GM12878 (cell line): ENCODE measurements at regions of chr14 and their contacts with region 1.

Region 1: GRCh38 chr14:22319526-22320361 is 269.3 kb downstream of the DAD1 start:
- DNase-seq: peak; percentile 42
- ATAC-seq: peak; percentile 97
- H3K4me3 ChIP-seq: no peak overlapping the region
- H3K27ac ChIP-seq: no peak overlapping the region
- H3K4me1 ChIP-seq: no peaks in the 10 kb centered on the region
- H3K27me3 ChIP-seq: no peaks in the 10 kb centered on the region
- CTCF ChIP-seq: peak; percentile 68 to 80 (median 73); a peak in 5 of 6 replicates
- EP300 ChIP-seq: no peak
- POLR2A ChIP-seq: no peak
- RAD21 ChIP-seq: peak; percentile 83

Region 2: GRCh38 chr14:22200977-22201605 is 118.7 kb before region 1 on chr14:
- CTCF ChIA-PET with region 1: interaction called, 21 read pairs
- POLR2A ChIA-PET with region 1: no interaction called
- RAD21 ChIA-PET with region 1: no interaction called
- SMC1A ChIA-PET with region 1: interaction called, 15 read pairs
- in situ Hi-C with region 1: no loop called
- intact Hi-C with region 1: no loop called
- DNase-seq: peak; percentile 3
- ATAC-seq: peak; percentile 93
- H3K4me3 ChIP-seq: no peak overlapping the region
- H3K27ac ChIP-seq: no peak overlapping the region
- H3K4me1 ChIP-seq: no peaks in the 10 kb centered on the region
- H3K27me3 ChIP-seq: no peaks in the 10 kb centered on the region; a peak in 1 of 4 replicates
- CTCF ChIP-seq: peak; percentile 64 to 72 (median 65); a peak in 5 of 6 replicates
- EP300 ChIP-seq: no peak
- POLR2A ChIP-seq: no peak
- RAD21 ChIP-seq: peak; percentile 64

Region 3: DNA sequence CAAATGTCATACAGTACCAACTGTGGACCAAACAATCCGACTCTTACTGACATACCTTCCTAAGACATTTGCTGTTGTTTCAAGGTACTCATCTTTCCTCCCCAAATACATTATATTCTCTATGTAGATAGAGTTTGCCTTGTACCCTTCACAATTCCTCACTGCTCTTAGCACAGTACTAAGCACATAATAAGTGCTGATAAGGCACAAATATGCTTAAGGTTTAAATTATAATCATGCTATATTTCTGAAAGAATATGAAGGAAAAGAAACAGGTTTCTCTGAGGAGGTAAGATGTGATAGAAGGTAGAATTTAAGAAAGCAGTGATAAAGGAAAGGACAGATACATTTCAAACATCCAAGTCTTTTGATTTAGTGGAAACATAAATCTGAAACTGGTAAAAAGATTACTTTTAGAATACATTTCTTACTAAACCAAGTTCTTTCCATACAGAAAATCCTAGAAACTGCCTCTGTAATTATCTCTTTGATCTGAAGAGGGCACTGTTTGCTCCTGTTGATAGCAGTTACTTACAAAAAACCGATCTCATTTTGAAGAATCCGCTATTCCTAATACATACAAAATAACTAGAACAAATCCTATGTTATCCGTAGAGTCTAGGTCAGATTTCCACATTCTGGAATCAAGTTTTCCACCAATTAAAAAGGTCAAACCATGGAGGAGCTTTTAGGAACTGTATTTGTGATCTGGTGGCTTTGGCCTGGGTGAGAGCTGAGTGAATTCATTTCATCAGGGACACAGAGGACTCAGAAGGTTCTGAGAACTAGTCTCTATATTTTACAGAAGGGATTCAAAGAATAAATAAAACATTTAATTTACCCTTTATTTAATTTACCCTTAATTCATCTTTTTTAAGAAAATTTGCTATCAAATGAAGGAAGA is 42.6 kb before region 1 on chr14:
- CTCF ChIA-PET with region 1: interaction called, 52 read pairs
- POLR2A ChIA-PET with region 1: no interaction called
- RAD21 ChIA-PET with region 1: interaction called, 9 read pairs
- SMC1A ChIA-PET with region 1: interaction called, 17 read pairs
- in situ Hi-C with region 1: no loop called
- intact Hi-C with region 1: no loop called
- DNase-seq: no peak
- ATAC-seq: 0 out of 3 replicates have a peak, but pooled peaks have one; percentile 31
- H3K4me3 ChIP-seq: no peak overlapping the region
- H3K27ac ChIP-seq: no peak overlapping the region
- H3K4me1 ChIP-seq: no peaks in the 10 kb centered on the region
- H3K27me3 ChIP-seq: peaks cover 0 to 5% of the 10 kb centered on the region in 2 experiments; a peak in 3 of 4 replicates
- CTCF ChIP-seq: peak; percentile 53 to 69 (median 56)
- EP300 ChIP-seq: no peak
- POLR2A ChIP-seq: no peak
- RAD21 ChIP-seq: peak; percentile 49

Region 4: GRCh38 chr14:22303589-22304195 is 16.1 kb before region 1 on chr14:
- CTCF ChIA-PET with region 1: interaction called, 42 read pairs
- POLR2A ChIA-PET with region 1: interaction called, 4 read pairs
- RAD21 ChIA-PET with region 1: interaction called, 7 read pairs
- SMC1A ChIA-PET with region 1: interaction called, 36 read pairs
- in situ Hi-C with region 1: no loop called
- intact Hi-C with region 1: no loop called
- DNase-seq: no peak
- ATAC-seq: no peak
- H3K4me3 ChIP-seq: no peak overlapping the region
- H3K27ac ChIP-seq: no peak overlapping the region
- H3K4me1 ChIP-seq: no peaks in the 10 kb centered on the region
- H3K27me3 ChIP-seq: 0 out of 4 replicates have a peak, but pooled peaks cover 0 to 5% of the 10 kb centered on the region in 2 experiments
- CTCF ChIP-seq: peak; percentile 39 to 48 (median 44); a peak in 4 of 6 replicates
- EP300 ChIP-seq: no peak
- POLR2A ChIP-seq: no peak
- RAD21 ChIP-seq: peak; percentile 61

Region 5: DNA sequence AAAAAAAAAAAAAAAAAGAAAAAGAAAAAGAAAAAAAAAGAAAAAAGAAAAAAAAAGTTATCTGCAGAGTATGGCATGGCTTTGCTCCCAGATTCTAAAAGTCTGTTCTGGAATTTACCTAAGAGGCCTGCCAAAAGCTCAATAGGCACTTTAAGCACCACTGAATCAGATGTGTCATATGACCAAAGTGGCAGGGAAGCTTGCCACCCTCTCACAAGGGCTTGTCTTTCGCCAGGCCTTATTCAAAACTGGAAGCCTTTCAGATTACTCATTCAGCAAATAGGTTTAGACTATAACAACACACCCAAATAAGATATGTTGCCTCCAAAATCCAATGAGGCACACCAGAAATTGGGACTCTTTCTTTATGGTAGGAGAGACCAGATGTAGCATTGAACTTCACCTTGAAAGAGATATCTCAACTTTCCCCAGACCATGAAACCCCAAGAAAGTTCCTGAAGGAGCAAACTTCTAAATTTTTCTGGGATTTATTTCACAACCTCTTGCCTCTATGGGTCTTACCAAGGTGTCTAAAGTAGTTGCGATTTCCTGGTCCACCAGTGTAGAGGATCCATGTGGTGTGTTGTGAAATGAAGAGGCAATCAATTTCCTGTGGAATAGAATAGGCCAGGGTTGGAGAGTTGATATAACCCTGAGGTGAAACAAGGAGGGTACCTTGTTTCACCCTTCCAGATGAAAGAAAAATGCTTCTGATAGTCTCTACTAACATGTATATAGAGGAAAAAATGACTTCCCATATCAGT is 50.5 kb after region 1 on chr14:
- CTCF ChIA-PET with region 1: interaction called, 333 read pairs
- POLR2A ChIA-PET with region 1: interaction called, 6 read pairs
- RAD21 ChIA-PET with region 1: interaction called, 174 read pairs
- SMC1A ChIA-PET with region 1: interaction called, 238 read pairs
- in situ Hi-C with region 1: no loop called
- intact Hi-C with region 1: loop called (anchors 1 kb)
- DNase-seq: no peak
- ATAC-seq: no peak
- H3K4me3 ChIP-seq: no peak overlapping the region
- H3K27ac ChIP-seq: no peak overlapping the region
- H3K4me1 ChIP-seq: no peaks in the 10 kb centered on the region
- H3K27me3 ChIP-seq: no peaks in the 10 kb centered on the region
- CTCF ChIP-seq: no peak
- EP300 ChIP-seq: no peak
- POLR2A ChIP-seq: no peak
- RAD21 ChIP-seq: no peak

Region 6: DNA sequence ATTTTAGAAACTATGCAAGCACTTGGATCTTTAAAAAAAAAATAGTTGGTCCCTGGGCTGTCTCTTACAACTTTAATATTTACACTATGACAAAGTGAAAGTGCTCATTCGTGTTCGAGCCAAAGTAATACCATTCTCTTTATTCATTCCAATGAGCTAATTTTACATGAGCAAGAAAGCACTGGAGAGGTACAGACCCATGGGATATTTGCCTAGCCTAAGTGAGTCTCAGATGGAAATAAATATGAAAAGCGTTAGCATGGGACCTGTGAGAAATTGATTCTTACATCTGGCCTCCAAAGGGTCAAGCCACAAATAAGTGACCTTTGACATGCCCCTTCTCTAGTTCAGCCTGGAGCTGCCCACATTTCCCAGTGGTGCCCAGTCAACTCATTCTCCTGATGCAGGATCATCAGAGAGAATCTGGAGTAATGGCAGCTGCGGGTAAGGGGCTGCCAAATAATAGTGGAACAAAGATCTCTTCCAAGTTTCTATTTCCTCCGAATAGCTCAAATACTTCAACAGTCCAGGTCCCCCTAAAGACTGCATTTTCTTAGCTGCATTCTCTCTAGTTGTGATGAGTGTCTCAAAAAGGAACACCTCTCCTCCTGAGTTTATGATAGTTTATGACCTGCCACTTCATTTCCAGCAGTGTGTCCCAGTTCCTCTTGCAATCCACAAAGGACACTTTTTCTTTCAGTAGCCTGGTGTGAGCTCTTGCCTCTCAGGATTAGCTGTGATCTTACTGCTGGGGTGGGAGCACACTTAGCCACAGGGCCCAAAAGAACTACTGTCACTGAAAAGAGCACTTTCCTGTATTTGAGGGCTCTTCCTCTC is 61.0 kb after region 1 on chr14:
- CTCF ChIA-PET with region 1: interaction called, 333 read pairs
- POLR2A ChIA-PET with region 1: interaction called, 4 read pairs
- RAD21 ChIA-PET with region 1: interaction called, 174 read pairs
- SMC1A ChIA-PET with region 1: interaction called, 238 read pairs
- in situ Hi-C with region 1: loop called (anchors 5 kb)
- intact Hi-C with region 1: loop called (anchors 1 kb)
- DNase-seq: no peak
- ATAC-seq: no peak
- H3K4me3 ChIP-seq: no peak overlapping the region
- H3K27ac ChIP-seq: no peak overlapping the region
- H3K4me1 ChIP-seq: peaks cover 39% of the 10 kb centered on the region
- H3K27me3 ChIP-seq: no peaks in the 10 kb centered on the region
- CTCF ChIP-seq: no peak
- EP300 ChIP-seq: no peak
- POLR2A ChIP-seq: no peak
- RAD21 ChIP-seq: no peak

Region 7: DNA sequence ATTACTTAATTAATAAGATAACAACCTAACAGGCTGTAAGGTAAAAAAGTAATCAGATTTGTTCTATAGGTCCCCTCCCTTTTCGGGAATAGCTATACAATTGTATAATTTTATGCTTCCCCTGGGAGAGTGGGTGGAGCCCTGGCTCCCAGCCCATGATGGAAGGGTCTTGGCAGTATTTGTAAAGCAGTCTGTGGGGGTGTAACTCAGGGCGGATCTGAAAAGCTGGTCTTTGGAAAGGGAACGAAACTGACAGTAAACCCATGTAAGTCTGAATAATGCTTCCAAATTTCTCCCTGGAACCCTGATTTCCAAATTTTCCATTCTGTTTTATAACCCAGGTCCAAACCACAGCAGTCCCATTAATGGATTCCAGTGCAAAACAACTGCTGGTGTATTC is 158.9 kb after region 1 on chr14:
- CTCF ChIA-PET with region 1: interaction called, 165 read pairs
- POLR2A ChIA-PET with region 1: no interaction called
- RAD21 ChIA-PET with region 1: interaction called, 8 read pairs
- SMC1A ChIA-PET with region 1: interaction called, 132 read pairs
- in situ Hi-C with region 1: loop called (anchors 5 kb)
- intact Hi-C with region 1: loop called (anchors 2 kb)
- DNase-seq: no peak
- ATAC-seq: peak; percentile 5; the same call in 1 of the 3 replicates
- H3K4me3 ChIP-seq: peak overlapping the region; percentile 66; the same call in 1 of the 2 replicates
- H3K27ac ChIP-seq: peak overlapping the region; percentile 98
- H3K4me1 ChIP-seq: peaks cover 71% of the 10 kb centered on the region
- H3K27me3 ChIP-seq: no peaks in the 10 kb centered on the region
- CTCF ChIP-seq: no peak
- EP300 ChIP-seq: 0 out of 4 replicates have a peak, but pooled peaks of 1 of the 2 experiments have one; percentile 1
- POLR2A ChIP-seq: no peak
- RAD21 ChIP-seq: no peak